Psoas muscle (tissue), 8 donors: ENCODE measurements at regions of chr7 and their contacts with region 1.

Region 1: GRCh38 chr7:1664711-1665548 is 5.1 kb upstream of the ELFN1 start:
- DNase-seq: peak; percentile 66 to 80
- ATAC-seq: peak; percentile 59 to 86 (median 65)
- H3K4me3 ChIP-seq: peak overlapping the region; percentile 74
- H3K27ac ChIP-seq: peak overlapping the region; percentile 9
- H3K4me1 ChIP-seq: peaks cover 12% of the 10 kb centered on the region
- H3K27me3 ChIP-seq: peaks cover 0 to 79% (median 27%) of the 10 kb centered on the region in 3 donors
- CTCF ChIP-seq: peak; percentile 67

Region 2: GRCh38 chr7:1758028-1758858 is 93.3 kb after region 1 on chr7:
- intact Hi-C with region 1: loop called (anchors 5 kb)
- DNase-seq: peak in 1 of 2 donors; percentile 76
- ATAC-seq: peak; percentile 80 to 95 (median 93)
- H3K4me3 ChIP-seq: no peak overlapping the region
- H3K27ac ChIP-seq: no peak overlapping the region
- H3K4me1 ChIP-seq: peaks cover 7% of the 10 kb centered on the region
- H3K27me3 ChIP-seq: peaks cover 0 to 24% (median 0%) of the 10 kb centered on the region in 3 donors
- CTCF ChIP-seq: peak; percentile 48